Activated CD4-positive, alpha-beta T cell treated with anti-CD3 and anti-CD28 coated beads, Interleukin-2, amount 10 ng/mL, durations not matched to agents 7 days and 5 days (primary cell): ENCODE measurements at regions of chr12 and their contacts with region 1.

Region 1: GRCh38 chr12:1650260-1650977 is 21.4 kb downstream of the WNT5B start:
- DNase-seq: no peak
- H3K4me3 Mint-ChIP-seq: no peak overlapping the region
- H3K27ac Mint-ChIP-seq: no peak overlapping the region
- H3K4me1 Mint-ChIP-seq: peaks cover 9% of the 10 kb centered on the region
- H3K27me3 Mint-ChIP-seq: peaks cover 44% of the 10 kb centered on the region

Region 2: GRCh38 chr12:1668833-1669543 is 18.6 kb after region 1 on chr12:
- CTCF ChIA-PET with region 1: interaction called, 10 read pairs
- POLR2A ChIA-PET with region 1: no interaction called
- DNase-seq: no peak
- H3K4me3 Mint-ChIP-seq: no peak overlapping the region
- H3K27ac Mint-ChIP-seq: peak overlapping the region; percentile 43
- H3K4me1 Mint-ChIP-seq: peaks cover 46% of the 10 kb centered on the region
- H3K27me3 Mint-ChIP-seq: no peaks in the 10 kb centered on the region

Region 3: GRCh38 chr12:1939801-1940607 is 289.6 kb after region 1 on chr12:
- CTCF ChIA-PET with region 1: interaction called, 22 read pairs
- POLR2A ChIA-PET with region 1: no interaction called
- DNase-seq: peak; percentile 91
- H3K4me3 Mint-ChIP-seq: no peak overlapping the region
- H3K27ac Mint-ChIP-seq: peak overlapping the region; percentile 78
- H3K4me1 Mint-ChIP-seq: peaks cover 4% of the 10 kb centered on the region
- H3K27me3 Mint-ChIP-seq: no peaks in the 10 kb centered on the region